AG04449 (cell line): ENCODE measurements at regions of chr20 and their contacts with region 1.

Region 1: GRCh38 chr20:49356676-49357075 is 78.8 kb upstream of the ZNFX1 start:
- DNase-seq: no peak
- H3K4me3 ChIP-seq: no peak overlapping the region
- CTCF ChIP-seq: no peak

Region 2: GRCh38 chr20:48787861-48788375 is 568.8 kb before region 1 on chr20:
- CTCF ChIA-PET with region 1: no interaction called
- POLR2A ChIA-PET with region 1: no interaction called
- DNase-seq: no peak
- H3K4me3 ChIP-seq: no peak overlapping the region
- CTCF ChIP-seq: no peak

Region 3: DNA sequence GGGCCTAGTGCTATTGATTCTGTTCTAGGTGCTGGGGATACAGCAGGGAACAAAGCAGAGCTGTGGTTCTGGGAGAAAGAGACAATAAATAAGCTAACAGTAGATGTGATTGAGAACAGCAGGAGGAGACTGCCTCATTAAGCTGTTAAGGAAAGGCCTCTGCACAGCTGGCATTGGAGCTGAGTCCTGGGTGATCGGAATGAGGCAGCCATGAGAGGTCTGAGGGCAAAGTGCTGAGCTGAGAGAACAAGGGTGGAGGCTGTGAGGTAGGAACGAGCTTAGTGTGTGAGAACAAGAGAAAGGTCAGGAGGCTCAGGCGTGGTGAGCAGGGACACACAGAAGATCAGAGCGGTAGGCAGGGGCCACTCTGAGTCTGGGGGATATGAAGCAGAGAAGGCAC is 119.1 kb before region 1 on chr20:
- CTCF ChIA-PET with region 1: no interaction called
- POLR2A ChIA-PET with region 1: no interaction called
- DNase-seq: no peak
- H3K4me3 ChIP-seq: no peak overlapping the region
- CTCF ChIP-seq: no peak

Region 4: GRCh38 chr20:49344975-49345374 is 11.7 kb before region 1 on chr20:
- CTCF ChIA-PET with region 1: interaction called, 17 read pairs
- POLR2A ChIA-PET with region 1: no interaction called
- DNase-seq: peak; percentile 71
- H3K4me3 ChIP-seq: peak overlapping the region; percentile 37
- CTCF ChIP-seq: no peak